ENCODE measurements at regions of chr1 and their contacts with region 1.

Region 1: GRCh38 chr1:28248283-28249012 is 10.9 kb upstream of the SESN2 start:
- DNase-seq: peak; percentile 68
- H3K4me3 ChIP-seq: peak overlapping the region in 2 of 3 experiments; percentile 17 to 29
- H3K27ac ChIP-seq: peak overlapping the region; percentile 56
- H3K4me1 ChIP-seq: peaks cover 40% of the 10 kb centered on the region
- H3K27me3 ChIP-seq: no peaks in the 10 kb centered on the region
- CTCF ChIP-seq: peak; percentile 92 to 95

Region 2: GRCh38 chr1:28259307-28260167 is 11.1 kb after region 1 on chr1 and contains the start of gene SESN2:
- CTCF ChIA-PET with region 1: interaction called, 9 read pairs
- dilution Hi-C with region 1: no loop called
- in situ Hi-C with region 1: no loop called
- intact Hi-C with region 1: loop called (anchors 1 kb)
- DNase-seq: peak; percentile 99
- H3K4me3 ChIP-seq: peak within 1 kb of the TSS; percentile 79 to 93 (median 86)
- H3K27ac ChIP-seq: peak within 1 kb of the TSS; percentile 81
- H3K4me1 ChIP-seq: peaks cover 24% of the 10 kb centered on the region
- H3K27me3 ChIP-seq: no peaks in the 10 kb centered on the region
- CTCF ChIP-seq: no peak
- total RNA-seq, gene SESN2: 83.0 to 98.5 TPM

Region 3: GRCh38 chr1:28273216-28273860 is 24.9 kb after region 1 on chr1:
- CTCF ChIA-PET with region 1: no interaction called
- dilution Hi-C with region 1: no loop called
- in situ Hi-C with region 1: no loop called
- intact Hi-C with region 1: loop called (anchors 2 kb)
- DNase-seq: no peak
- H3K4me3 ChIP-seq: no peak overlapping the region
- H3K27ac ChIP-seq: no peak overlapping the region
- H3K4me1 ChIP-seq: no peaks in the 10 kb centered on the region
- H3K27me3 ChIP-seq: no peaks in the 10 kb centered on the region
- CTCF ChIP-seq: no peak

Region 4: GRCh38 chr1:28329395-28330153 is 81.1 kb after region 1 on chr1:
- CTCF ChIA-PET with region 1: no interaction called
- dilution Hi-C with region 1: no loop called
- in situ Hi-C with region 1: no loop called
- intact Hi-C with region 1: loop called (anchors 1 kb)
- DNase-seq: no peak
- H3K4me3 ChIP-seq: peak overlapping the region; percentile 68 to 81 (median 69)
- H3K27ac ChIP-seq: peak overlapping the region; percentile 93
- H3K4me1 ChIP-seq: peaks cover 18% of the 10 kb centered on the region
- H3K27me3 ChIP-seq: no peaks in the 10 kb centered on the region
- CTCF ChIP-seq: no peak

Region 5: GRCh38 chr1:28369371-28370238 is 121.2 kb after region 1 on chr1 and contains the start of gene PHACTR4:
- CTCF ChIA-PET with region 1: interaction called, 5 read pairs
- dilution Hi-C with region 1: no loop called
- in situ Hi-C with region 1: no loop called
- intact Hi-C with region 1: loop called (anchors 1 kb)
- DNase-seq: peak; percentile 89
- H3K4me3 ChIP-seq: peak within 1 kb of the TSS; percentile 48 to 93 (median 83)
- H3K27ac ChIP-seq: peak within 1 kb of the TSS; percentile 69
- H3K4me1 ChIP-seq: peaks cover 24% of the 10 kb centered on the region
- H3K27me3 ChIP-seq: no peaks in the 10 kb centered on the region
- CTCF ChIP-seq: peak in 1 of 2 donors; percentile 4
- total RNA-seq, gene PHACTR4: 14.7 to 34.1 TPM

Region 6: DNA sequence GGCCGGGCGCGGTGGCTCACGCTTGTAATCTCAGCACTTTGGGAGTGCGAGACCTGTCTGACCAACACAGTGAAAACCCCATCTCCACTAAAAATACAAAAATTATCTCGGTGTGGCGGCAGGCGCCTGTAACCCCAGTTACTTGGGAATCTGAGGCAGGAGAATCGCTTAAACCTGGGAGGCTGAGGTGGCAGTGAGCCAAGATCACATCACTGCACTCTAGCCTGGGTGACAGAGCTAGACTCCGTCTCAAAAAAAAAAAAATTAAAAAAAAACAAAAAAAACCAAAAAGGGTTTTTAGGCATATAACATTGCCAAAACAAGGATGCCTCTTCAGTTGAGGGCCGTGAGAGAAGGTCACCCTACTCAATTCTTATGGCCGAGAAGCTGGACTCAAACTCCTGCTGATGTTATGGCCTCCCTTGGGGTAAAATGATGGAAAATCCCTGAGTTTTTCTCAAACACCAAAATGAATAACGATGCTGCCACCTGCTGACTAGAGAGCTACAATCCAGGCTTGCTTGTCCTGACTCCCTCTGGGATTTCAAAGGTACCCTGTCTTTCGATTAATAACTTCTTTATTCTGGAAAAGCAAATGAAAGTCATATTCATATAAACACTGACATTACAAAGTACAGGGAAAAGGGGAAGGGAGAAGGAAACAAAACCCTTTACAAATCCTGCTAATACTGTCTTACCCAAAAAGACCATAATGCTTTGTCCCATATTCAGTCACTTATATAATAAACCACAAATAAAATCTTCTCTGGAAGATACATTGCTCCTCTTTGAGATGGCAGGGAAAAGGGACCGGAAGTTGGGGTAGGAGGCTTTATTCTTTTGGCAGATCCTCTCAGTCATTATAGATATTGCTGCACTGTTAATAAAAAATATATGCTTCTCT is 354.3 kb after region 1 on chr1:
- CTCF ChIA-PET with region 1: interaction called, 16 read pairs
- dilution Hi-C with region 1: no loop called
- in situ Hi-C with region 1: no loop called
- intact Hi-C with region 1: loop called (anchors 1 kb)
- DNase-seq: peak; percentile 78
- H3K4me3 ChIP-seq: no peak overlapping the region
- H3K27ac ChIP-seq: peak overlapping the region; percentile 63
- H3K4me1 ChIP-seq: peaks cover 27% of the 10 kb centered on the region
- H3K27me3 ChIP-seq: no peaks in the 10 kb centered on the region
- CTCF ChIP-seq: peak; percentile 66 to 76